Panc1 (cell line): ENCODE measurements at regions of chr7 and their contacts with region 1.

Region 1: DNA sequence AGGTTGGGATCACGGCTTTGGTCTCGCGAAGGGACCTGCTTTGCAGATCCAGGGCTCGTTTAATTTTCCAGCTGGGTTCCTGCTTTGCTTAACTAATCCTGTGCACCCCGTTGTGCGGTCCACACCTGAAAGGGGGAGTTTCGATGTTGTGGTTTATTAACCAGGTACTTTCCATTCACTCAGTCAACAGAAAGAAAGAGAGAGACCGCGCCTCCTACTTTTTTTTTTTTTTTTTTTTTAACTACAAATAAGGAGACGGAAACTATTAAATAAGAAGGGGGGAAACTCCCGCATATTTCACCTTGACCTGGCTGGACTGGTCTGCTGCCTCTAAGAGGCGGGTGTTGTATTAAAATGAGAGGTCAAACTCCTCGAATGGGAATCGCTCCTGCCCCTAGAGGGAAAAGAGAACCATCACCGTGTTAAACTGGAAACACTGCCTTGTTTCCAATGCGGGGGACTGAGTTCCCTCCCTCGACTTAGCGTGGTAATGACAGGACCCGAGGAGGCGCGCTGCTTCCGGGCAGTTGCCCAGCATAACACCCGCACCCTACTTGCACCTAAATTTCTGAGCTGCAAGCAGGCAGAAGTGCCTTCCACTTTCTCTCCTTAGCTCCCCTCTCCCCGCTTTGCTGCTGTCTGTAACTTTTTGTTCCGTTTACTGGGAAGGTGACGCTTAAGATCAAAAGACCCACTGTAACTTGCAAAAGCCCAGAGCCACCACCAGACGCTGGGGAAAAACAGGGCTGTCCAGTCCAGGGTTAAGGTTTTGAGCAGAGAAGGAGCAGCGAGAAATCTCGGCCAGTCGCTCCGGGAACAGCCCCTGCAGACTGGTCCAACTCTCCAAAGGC is 1.1 kb upstream of the ITGB8 start:
- DNase-seq: no peak
- ATAC-seq: peak; percentile 79
- H3K4me3 ChIP-seq: peak overlapping the region; percentile 64 to 76
- H3K27ac ChIP-seq: peak overlapping the region; percentile 45; the same call in 1 of the 2 replicates
- H3K4me1 ChIP-seq: peaks cover 8% of the 10 kb centered on the region; the same call in 1 of the 2 replicates
- H3K27me3 ChIP-seq: peaks cover 19% of the 10 kb centered on the region
- CTCF ChIP-seq: peak; percentile 41

Region 2: DNA sequence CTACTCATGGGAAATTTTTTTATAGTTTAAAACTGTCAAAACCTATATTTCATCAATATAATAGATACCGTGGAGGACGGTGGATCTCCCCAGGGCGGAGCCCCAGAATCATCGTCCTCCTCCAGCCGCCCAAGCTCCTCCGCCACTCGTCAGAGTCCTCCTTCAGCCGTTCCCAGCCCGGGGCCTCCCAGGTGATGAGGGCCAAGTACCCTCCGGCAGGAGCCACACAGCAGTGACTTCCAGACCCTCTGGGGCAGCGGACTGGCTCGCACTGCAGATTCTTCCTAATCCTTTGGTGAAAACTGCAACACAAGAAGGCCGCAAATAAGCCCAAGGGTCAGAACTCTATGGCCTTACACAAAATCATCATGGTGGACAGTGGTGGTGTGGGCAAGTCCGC is 259.1 kb after region 1 on chr7:
- CTCF ChIA-PET with region 1: interaction called, 3 read pairs
- POLR2A ChIA-PET with region 1: no interaction called
- in situ Hi-C with region 1: no loop called
- intact Hi-C with region 1: loop called (anchors 5 kb)
- DNase-seq: no peak
- ATAC-seq: no peak
- H3K4me3 ChIP-seq: no peak overlapping the region
- H3K27ac ChIP-seq: no peak overlapping the region
- H3K4me1 ChIP-seq: no peaks in the 10 kb centered on the region
- H3K27me3 ChIP-seq: no peaks in the 10 kb centered on the region
- CTCF ChIP-seq: no peak